ENCODE measurements at regions of chr5 and their contacts with region 1.

Region 1: DNA sequence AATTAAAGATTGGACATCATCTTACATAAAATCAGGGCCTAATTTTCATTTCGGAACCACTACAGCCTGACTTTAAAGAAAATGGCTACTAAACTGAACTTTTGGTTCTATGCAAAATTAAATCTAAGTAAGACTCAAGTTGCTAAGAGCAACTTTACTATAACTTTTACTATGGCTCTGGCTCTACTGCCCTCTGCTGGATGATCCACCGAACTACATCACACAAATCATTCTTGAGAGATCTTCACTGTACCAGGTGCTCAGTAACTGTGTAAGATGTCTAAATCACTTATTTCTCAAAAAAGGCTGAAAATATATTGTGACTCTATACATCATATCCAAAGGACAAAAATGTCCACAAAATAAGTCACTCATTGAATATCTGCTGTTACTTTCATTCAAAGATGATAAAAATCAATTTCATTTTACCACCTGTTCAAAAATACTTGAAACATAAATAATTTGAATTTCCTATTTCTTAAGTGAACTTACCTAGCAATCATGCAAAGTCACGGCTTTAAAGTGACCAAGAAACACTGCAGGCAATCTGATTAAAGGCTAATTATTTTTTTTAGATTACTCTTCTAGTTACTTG is 13.5 kb downstream of the MOCS2 start:
- DNase-seq: peak in 1 of 3 donors; percentile 82
- ATAC-seq: peak; percentile 91
- H3K4me3 ChIP-seq: no peak overlapping the region
- H3K4me1 ChIP-seq: no peaks in the 10 kb centered on the region
- CTCF ChIP-seq: peak; percentile 71

Region 2: GRCh38 chr5:52725065-52725746 is 370.8 kb before region 1 on chr5:
- intact Hi-C with region 1: no loop called
- DNase-seq: peak in 2 of 3 donors; percentile 13 to 74
- ATAC-seq: peak; percentile 95
- H3K4me3 ChIP-seq: no peak overlapping the region
- H3K4me1 ChIP-seq: peaks cover 26% of the 10 kb centered on the region
- CTCF ChIP-seq: no peak

Region 3: DNA sequence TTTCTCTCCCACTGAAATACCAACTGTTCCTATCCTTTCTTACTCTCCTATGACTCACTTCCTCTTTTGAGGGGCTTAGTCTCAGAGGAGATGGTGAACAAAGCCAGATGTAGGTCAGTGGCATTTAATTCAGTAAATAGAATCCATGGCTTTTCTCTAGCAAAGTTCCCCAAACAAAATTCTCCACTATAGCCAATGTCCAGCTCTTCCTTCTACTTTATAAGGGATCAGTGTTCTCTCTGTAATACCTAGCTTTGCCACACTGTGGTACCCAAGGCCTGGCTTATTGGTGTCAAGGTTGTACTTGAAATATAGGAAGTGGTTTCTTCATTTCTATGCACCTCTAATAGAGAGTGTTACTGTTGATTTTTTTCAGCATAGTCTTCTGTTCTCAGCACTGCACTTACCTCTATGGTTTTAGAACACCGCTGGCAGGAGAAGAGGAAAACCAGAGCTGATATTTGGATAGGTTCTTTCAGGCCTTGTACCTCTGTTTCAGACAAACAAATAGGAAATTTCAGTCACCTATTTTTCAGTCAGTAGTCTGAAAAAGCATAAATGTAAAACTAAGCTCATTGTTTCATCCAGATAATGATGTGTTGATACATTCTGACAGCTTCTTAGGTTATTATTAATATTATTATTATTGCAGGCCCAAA is 147.5 kb before region 1 on chr5:
- intact Hi-C with region 1: loop called (anchors 1 to 5 kb)
- DNase-seq: peak in 1 of 3 donors; percentile 86
- ATAC-seq: peak; percentile 99
- H3K4me3 ChIP-seq: no peak overlapping the region
- H3K4me1 ChIP-seq: no peaks in the 10 kb centered on the region
- CTCF ChIP-seq: peak; percentile 61